Activated CD4-positive, alpha-beta T cell treated with anti-CD3 and anti-CD28 coated beads for 36 hours (primary cell): ENCODE measurements at regions of chr19 and their contacts with region 1.

Region 1: GRCh38 chr19:8389891-8390616 is at the start of gene RAB11B:
- DNase-seq: peak; percentile 99
- ATAC-seq: peak; percentile 94
- H3K4me3 Mint-ChIP-seq: peak within 1 kb of the TSS; percentile 92
- H3K27ac Mint-ChIP-seq: peak within 1 kb of the TSS; percentile 97
- H3K4me1 Mint-ChIP-seq: peaks cover 23% of the 10 kb centered on the region
- H3K27me3 Mint-ChIP-seq: no peaks in the 10 kb centered on the region
- total RNA-seq, gene RAB11B: 74.3 to 93.4 TPM

Region 2: DNA sequence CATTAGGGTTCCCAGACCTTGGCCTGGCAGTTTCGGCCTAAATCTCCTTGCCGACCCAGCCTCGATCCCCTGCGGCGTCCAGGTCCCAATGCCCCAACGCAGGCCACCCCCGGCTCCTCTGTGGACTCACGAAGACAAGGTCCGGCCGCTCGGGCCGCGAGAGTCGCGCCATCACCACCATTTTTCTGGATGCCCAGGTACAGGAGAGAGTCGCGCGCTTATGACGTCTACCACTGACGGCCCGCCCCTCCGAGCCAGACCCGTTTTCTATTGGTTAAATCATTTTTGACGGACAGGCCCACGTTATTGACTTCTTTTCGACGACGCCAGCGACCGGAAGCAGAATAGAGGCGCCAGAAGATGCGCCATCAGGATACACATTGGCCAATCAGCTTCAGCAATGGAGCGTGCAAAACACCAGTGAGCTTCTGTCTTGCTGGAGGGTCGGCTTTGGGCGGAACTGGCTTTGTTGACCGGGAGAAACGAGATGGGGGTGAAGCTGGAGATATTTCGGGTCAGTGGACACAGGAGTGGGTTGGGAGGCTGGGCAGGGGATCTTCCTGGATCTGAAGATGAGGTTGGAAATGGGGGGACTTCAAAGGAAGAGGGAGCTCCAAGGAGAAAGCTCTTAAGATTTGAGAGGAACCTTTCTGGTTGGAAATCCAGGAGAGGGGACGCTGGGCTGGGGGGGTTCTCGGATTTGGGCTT is 760.6 kb before region 1 on chr19 and contains the starts of genes PET100 and XAB2:
- CTCF ChIA-PET with region 1: no interaction called
- POLR2A ChIA-PET with region 1: no interaction called
- intact Hi-C with region 1: loop called in 1 of 2 experiments (anchors 1 kb)
- DNase-seq: peak; percentile 97
- ATAC-seq: peak; percentile 99
- H3K4me3 Mint-ChIP-seq: peak within 1 kb of the TSS; percentile 88
- H3K27ac Mint-ChIP-seq: peak within 1 kb of the TSS; percentile 97
- H3K4me1 Mint-ChIP-seq: peaks cover 32% of the 10 kb centered on the region
- H3K27me3 Mint-ChIP-seq: no peaks in the 10 kb centered on the region
- total RNA-seq, gene PET100: 45.1 to 99.4 TPM
- total RNA-seq, gene XAB2: 45.9 to 48.3 TPM

Region 3: DNA sequence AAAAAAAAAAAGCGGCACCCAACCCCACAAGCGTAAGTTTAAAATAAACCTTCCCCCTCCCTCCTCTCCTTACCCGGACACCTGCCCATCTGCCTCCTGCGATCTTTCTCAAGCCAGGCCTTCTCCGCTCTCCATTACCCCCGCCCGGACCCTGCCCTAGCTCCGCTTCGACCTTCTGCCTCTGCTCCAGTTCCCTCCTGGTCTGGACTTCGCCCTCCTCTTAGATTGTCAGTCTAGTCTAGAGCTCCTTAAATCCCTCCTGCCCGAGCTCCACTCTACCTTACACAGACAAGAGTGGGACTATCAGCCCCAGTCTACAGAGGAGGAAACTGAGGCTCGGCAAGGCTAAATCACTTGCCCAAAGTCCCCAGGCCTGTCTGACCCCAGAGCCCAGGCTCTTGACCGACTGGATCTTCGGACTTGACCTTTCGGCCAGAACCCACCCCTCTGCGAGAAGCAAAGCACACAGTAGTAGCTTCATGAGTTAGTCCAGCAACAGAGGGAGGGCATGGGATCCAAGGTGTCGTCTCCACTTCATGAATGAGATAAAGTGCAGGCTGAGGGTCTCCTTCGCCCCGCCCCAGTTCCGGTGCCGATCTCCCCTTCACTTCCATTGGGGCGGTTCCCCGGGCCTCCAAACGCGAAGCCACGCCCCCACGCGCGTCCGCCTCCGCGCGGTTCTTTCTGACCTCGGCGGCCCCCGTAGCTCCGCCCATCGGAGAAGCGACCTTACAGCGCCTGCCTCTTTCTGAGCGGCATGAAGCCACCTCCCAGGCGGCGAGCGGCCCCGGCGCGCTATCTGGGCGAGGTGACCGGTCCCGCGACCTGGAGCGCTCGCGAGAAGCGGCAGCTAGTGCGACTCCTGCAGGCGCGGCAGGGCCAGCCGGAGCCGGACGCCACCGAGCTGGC is 470.2 kb before region 1 on chr19 and contains the start of gene SNAPC2:
- CTCF ChIA-PET with region 1: no interaction called
- POLR2A ChIA-PET with region 1: no interaction called
- intact Hi-C with region 1: loop called in 1 of 2 experiments (anchors 1 kb)
- DNase-seq: peak; percentile 98
- ATAC-seq: peak; percentile 76
- H3K4me3 Mint-ChIP-seq: peak within 1 kb of the TSS; percentile 82
- H3K27ac Mint-ChIP-seq: peak within 1 kb of the TSS; percentile 87
- H3K4me1 Mint-ChIP-seq: peaks cover 32% of the 10 kb centered on the region
- H3K27me3 Mint-ChIP-seq: peaks cover 20% of the 10 kb centered on the region
- total RNA-seq, gene SNAPC2: 14.6 to 16.2 TPM

Region 4: DNA sequence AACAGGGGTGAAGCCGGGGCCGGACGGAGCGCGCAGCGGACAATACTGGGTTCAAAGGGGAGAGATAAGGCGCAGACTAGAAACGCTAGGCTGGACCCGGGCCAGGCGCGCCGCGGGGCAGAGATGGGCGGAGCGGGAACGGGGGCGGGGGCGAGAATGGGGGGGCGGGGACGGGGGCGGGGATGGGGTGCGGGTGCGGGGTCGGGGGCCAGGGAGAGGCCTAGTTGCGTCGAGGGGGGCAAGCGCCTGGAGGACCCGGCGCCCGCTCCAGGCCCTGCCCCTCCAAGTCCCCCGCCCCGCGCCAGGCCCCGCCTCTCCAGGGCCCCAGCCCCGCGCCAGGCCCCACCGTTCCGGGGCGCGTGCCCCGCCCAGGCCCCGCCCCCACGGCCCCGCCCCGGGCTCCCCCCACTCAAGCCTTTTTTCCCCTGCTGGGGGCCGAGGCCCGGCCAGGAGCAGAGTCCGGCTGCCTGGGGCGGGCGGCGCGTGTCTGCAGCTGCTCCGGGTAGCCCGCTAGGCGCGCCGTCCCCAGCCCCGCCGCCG is 181.1 kb before region 1 on chr19 and contains the start of gene CERS4:
- CTCF ChIA-PET with region 1: interaction called, 3 read pairs
- POLR2A ChIA-PET with region 1: no interaction called
- intact Hi-C with region 1: loop called in 1 of 2 experiments (anchors 1 kb)
- DNase-seq: peak; percentile 89
- ATAC-seq: peak; percentile 83
- H3K4me3 Mint-ChIP-seq: peak within 1 kb of the TSS; percentile 83
- H3K27ac Mint-ChIP-seq: peak within 1 kb of the TSS; percentile 94
- H3K4me1 Mint-ChIP-seq: peaks cover 24% of the 10 kb centered on the region
- H3K27me3 Mint-ChIP-seq: no peaks in the 10 kb centered on the region
- total RNA-seq, gene CERS4: 21.2 to 21.8 TPM

Region 5: DNA sequence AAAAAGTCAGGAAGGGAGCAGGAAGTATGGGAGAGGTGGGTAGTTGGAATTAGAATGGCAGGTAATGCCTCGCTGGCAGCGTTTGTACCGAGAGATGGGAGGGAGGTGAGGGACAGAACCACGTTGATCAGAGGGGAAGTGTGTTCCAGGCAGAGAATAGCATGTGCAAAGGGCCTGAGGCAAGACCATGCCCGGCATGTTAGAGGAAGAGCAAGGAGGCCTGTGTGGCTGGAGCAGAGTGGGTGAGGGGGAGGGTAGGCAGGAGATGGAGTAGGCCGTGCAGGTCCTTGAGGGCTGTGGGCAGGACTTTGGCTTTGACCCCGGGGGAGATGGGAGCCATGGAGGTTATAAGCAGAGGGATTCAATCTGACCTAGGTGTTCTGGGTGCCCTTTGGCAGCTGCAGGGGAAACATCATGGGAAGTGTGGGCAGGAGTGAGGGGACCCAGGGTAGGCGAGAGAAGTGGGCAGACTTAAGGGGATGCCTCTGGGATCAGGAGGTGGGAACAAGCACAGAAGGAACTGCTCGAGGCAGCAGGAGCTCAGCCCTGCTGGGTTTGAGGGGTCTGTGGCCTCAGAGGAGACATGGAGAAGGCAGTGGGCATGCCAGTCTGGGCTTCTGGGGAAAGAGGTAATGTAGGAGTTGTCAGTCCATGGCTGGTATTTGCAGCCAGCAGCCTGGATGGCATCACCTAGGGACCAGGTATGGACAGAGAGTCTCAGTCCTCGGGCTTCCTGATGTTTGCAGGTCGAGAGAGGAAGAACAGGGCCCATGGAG is 130.7 kb before region 1 on chr19:
- CTCF ChIA-PET with region 1: no interaction called
- POLR2A ChIA-PET with region 1: no interaction called
- intact Hi-C with region 1: no loop called
- DNase-seq: no peak
- ATAC-seq: no peak
- H3K4me3 Mint-ChIP-seq: no peak overlapping the region
- H3K27ac Mint-ChIP-seq: no peak overlapping the region
- H3K4me1 Mint-ChIP-seq: no peaks in the 10 kb centered on the region
- H3K27me3 Mint-ChIP-seq: no peaks in the 10 kb centered on the region

Region 6: DNA sequence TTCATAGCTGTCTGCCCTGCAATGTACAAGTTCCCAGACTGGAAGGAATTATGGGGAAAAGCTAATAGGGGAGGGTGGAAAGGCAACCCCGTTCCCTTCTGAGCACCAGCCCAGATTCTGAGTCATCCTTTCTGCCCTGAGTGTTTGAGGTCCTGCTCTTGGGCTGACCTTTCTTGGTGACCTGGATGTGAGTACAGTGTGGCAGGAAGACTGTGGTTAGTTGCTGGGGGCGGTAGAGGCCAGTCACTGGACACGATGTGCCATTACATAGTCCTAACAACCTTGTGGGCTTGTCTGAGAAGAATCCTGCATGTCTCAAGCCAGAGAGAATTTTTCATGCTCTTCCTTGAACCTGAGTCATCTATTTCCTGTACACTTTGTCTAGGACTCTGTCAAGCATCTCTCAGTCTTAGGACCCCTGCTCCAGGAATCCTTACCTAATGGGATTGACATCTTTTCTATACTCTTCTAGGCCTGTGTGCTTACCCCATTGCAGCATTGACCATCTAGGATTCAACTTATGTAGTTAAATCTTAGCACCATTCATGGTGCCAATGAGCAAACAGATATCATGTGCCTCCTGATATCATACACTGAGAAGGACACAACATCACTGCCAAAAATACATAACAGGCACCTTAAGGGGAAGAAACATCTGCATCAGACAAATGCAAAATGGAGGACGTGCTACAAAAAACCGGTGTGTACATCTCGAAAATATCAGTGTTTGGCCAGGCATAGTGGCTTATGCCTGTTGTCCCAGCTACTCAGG is 34.2 kb before region 1 on chr19:
- CTCF ChIA-PET with region 1: interaction called, 23 read pairs
- POLR2A ChIA-PET with region 1: no interaction called
- intact Hi-C with region 1: no loop called
- DNase-seq: no peak
- ATAC-seq: no peak
- H3K4me3 Mint-ChIP-seq: no peak overlapping the region
- H3K27ac Mint-ChIP-seq: no peak overlapping the region
- H3K4me1 Mint-ChIP-seq: peaks cover 6% of the 10 kb centered on the region
- H3K27me3 Mint-ChIP-seq: peaks cover 9% of the 10 kb centered on the region

Region 7: DNA sequence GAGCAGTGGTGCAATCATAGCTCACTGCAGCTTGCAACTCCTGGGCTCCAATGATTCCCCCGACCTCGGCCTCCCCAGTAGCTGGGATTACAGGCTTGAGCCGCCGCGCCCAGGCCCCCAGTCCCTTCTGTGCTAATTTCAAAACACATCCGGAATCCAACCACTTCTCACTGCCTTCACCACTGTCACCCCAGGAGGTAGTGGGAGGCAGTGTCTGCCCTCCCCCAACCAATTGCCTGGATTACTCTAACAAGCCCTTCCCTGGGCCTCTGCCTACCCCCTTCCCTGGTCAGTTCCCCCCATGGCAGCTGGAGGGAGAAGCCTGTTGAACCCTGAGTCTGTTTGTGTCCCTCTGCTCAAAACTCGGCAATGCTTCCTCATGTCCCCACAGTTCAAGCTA is 110.1 kb after region 1 on chr19:
- CTCF ChIA-PET with region 1: no interaction called
- POLR2A ChIA-PET with region 1: no interaction called
- intact Hi-C with region 1: no loop called
- DNase-seq: no peak
- ATAC-seq: no peak
- H3K4me3 Mint-ChIP-seq: no peak overlapping the region
- H3K27ac Mint-ChIP-seq: no peak overlapping the region
- H3K4me1 Mint-ChIP-seq: peaks cover 18% of the 10 kb centered on the region
- H3K27me3 Mint-ChIP-seq: no peaks in the 10 kb centered on the region

Region 8: GRCh38 chr19:8513687-8514504 is 123.8 kb after region 1 on chr19 and contains the start of gene ZNF414:
- CTCF ChIA-PET with region 1: interaction called, 5 read pairs
- POLR2A ChIA-PET with region 1: interaction called, 6 read pairs
- intact Hi-C with region 1: loop called in 1 of 2 experiments (anchors 1 kb)
- DNase-seq: peak; percentile 99
- ATAC-seq: peak; percentile 81
- H3K4me3 Mint-ChIP-seq: peak within 1 kb of the TSS; percentile 81
- H3K27ac Mint-ChIP-seq: peak within 1 kb of the TSS; percentile 97
- H3K4me1 Mint-ChIP-seq: peaks cover 55% of the 10 kb centered on the region
- H3K27me3 Mint-ChIP-seq: no peaks in the 10 kb centered on the region
- total RNA-seq, gene ZNF414: 21.0 to 23.7 TPM